Esophagus muscularis mucosa (tissue), 4 donors: ENCODE measurements at regions of chr12 and their contacts with region 1.

Region 1: GRCh38 chr12:113048716-113049127 is 7.8 kb upstream of the DTX1 start:
- DNase-seq: no peak
- H3K4me3 ChIP-seq: no peak overlapping the region
- H3K27ac ChIP-seq: no peak overlapping the region
- H3K4me1 ChIP-seq: no peaks in the 10 kb centered on the region
- H3K27me3 ChIP-seq: peaks cover 0 to 40% (median 0%) of the 10 kb centered on the region in 4 donors
- CTCF ChIP-seq: peak; percentile 75 to 80 (median 76)
- EP300 ChIP-seq: no peak
- POLR2A ChIP-seq: no peak

Region 2: GRCh38 chr12:113152835-113153814 is 104.4 kb after region 1 on chr12:
- intact Hi-C with region 1: loop called (anchors 5 kb)
- DNase-seq: no peak
- H3K4me3 ChIP-seq: peak overlapping the region; percentile 42 to 58 (median 48)
- H3K27ac ChIP-seq: no peak overlapping the region
- H3K4me1 ChIP-seq: peaks cover 18 to 38% (median 35%) of the 10 kb centered on the region in 4 donors
- H3K27me3 ChIP-seq: peaks cover 0 to 75% (median 25%) of the 10 kb centered on the region in 4 donors
- CTCF ChIP-seq: peak; percentile 35 to 49 (median 46)
- EP300 ChIP-seq: no peak
- POLR2A ChIP-seq: no peak

Region 3: GRCh38 chr12:113174461-113175384 is 126.0 kb after region 1 on chr12:
- intact Hi-C with region 1: loop called (anchors 5 kb)
- DNase-seq: no peak
- H3K4me3 ChIP-seq: no peak overlapping the region
- H3K27ac ChIP-seq: no peak overlapping the region
- H3K4me1 ChIP-seq: no peaks in the 10 kb centered on the region
- H3K27me3 ChIP-seq: no peaks in the 10 kb centered on the region
- CTCF ChIP-seq: peak in 2 of 3 experiments; percentile 88 to 95
- EP300 ChIP-seq: no peak
- POLR2A ChIP-seq: no peak